Activated CD4-positive, alpha-beta memory T cell treated with anti-CD3 and anti-CD28 coated beads, Interleukin-2, amount 10 ng/mL, durations not matched to agents 7 days and 5 days (primary cell): ENCODE measurements at regions of chr7 and their contacts with region 1.

Region 1: GRCh38 chr7:44885394-44886317 is at the start of gene PURB:
- DNase-seq: peak; percentile 97
- H3K4me3 Mint-ChIP-seq: peak within 1 kb of the TSS; percentile 95
- H3K27ac Mint-ChIP-seq: peak within 1 kb of the TSS; percentile 99
- H3K4me1 Mint-ChIP-seq: peaks cover 64% of the 10 kb centered on the region
- H3K27me3 Mint-ChIP-seq: no peaks in the 10 kb centered on the region
- total RNA-seq, gene PURB: 27.7 to 29.3 TPM

Region 2: GRCh38 chr7:44490351-44491200 is 395.1 kb before region 1 on chr7 and contains the start of gene NUDCD3:
- CTCF ChIA-PET with region 1: no interaction called
- POLR2A ChIA-PET with region 1: interaction called, 15 read pairs
- DNase-seq: peak; percentile 86
- H3K4me3 Mint-ChIP-seq: peak within 1 kb of the TSS; percentile 81
- H3K27ac Mint-ChIP-seq: peak within 1 kb of the TSS; percentile 85
- H3K4me1 Mint-ChIP-seq: peaks cover 43% of the 10 kb centered on the region
- H3K27me3 Mint-ChIP-seq: peaks cover 5% of the 10 kb centered on the region
- total RNA-seq, gene NUDCD3: 91.0 to 97.5 TPM

Region 3: DNA sequence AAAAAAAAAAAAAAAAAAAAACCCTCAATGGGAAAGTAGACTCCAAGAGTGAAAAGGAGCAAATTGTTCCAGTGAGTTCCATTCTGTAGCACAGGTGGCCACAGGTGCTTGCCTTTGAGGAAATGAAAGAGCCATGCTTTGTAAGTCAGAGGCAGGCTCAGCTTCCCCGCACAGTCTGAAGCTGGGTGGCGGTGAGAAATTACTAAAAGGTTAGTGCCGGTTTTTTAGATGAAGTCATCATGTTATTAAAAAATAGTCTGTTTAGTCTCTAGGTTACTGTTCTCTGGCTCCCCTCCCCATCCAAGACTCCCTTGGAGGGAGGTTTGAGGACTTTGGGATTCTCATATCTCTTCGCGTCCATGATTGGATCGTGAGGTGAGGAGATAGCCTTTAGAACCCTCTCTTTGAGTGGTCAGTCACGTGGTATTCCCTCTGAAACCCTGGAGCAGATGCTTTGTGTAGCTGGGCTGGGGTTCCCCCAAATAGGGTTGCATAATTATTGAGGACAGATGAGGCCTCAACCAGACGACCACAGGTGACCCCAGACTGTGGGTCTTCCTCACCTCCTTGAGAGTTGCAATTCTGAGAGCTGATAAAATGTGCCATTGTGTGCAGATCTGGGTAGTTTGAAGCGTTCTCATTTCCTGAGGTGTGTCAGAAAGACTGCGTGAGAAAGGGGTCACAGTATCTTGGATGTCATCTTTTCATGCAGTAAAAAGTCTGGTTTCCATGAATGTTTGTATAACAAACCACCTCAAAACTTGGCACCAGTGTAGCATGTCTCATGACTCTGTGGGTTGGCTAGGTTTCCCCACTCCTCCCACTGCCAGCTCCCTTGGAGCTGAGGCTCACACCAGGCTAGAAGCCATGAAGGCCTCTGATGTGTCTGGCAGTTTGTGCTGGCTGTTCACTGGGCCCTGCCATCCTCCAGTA is 252.1 kb before region 1 on chr7:
- CTCF ChIA-PET with region 1: no interaction called
- POLR2A ChIA-PET with region 1: interaction called, 25 read pairs
- DNase-seq: peak; percentile 67
- H3K4me3 Mint-ChIP-seq: no peak overlapping the region
- H3K27ac Mint-ChIP-seq: peak overlapping the region; percentile 100
- H3K4me1 Mint-ChIP-seq: peaks cover 99% of the 10 kb centered on the region
- H3K27me3 Mint-ChIP-seq: no peaks in the 10 kb centered on the region

Region 4: DNA sequence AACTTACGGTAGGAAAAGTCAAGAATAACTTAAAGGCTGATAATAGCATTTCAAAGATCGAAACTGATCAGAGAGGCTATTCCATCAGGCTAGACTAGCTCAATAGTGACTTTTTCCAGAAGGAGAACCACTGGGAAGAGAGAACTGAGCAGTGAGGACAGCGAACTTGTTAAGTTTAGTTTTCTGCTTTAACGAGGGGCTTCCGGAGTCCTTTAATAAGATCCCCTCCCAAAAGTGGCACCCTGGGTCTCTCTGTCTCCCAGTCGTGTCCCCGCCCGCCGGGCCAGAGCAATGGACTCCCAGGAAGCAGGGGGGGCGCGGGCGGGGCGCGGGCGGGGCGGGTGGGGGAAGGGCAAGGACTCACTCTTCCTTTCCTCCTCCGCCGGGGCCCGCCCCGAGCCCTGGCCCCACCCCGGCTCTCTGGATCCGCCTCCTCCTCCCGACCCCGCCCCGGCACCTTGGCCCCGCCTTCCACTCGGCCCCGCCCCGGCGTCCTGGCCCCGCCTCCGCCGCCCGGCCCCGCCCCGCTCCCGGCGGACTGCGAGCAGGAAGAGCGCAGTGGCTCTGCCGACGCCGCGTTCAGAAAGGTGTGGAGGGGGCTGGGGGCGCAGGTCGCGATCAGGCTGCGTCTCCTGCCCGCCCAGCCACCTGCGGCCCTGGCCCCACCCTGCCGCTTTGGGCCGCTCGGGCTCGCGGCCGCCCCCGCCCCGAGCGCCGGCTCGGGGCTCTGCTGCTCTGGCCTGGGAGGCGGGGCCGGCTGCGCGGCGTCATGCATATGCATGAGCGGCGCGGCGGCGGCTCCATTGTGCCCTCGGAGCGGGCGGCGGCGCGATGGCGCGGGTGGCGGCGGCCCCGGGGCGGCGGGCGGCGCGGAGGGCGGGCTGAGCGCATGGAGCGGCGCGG is 137.4 kb before region 1 on chr7 and contains the start of gene ZMIZ2:
- CTCF ChIA-PET with region 1: no interaction called
- POLR2A ChIA-PET with region 1: interaction called, 14 read pairs
- DNase-seq: peak; percentile 92
- H3K4me3 Mint-ChIP-seq: peak within 1 kb of the TSS; percentile 84
- H3K27ac Mint-ChIP-seq: peak within 1 kb of the TSS; percentile 66
- H3K4me1 Mint-ChIP-seq: peaks cover 43% of the 10 kb centered on the region
- H3K27me3 Mint-ChIP-seq: no peaks in the 10 kb centered on the region
- total RNA-seq, gene ZMIZ2: 85.2 to 91.4 TPM

Region 5: GRCh38 chr7:44823317-44823716 is 62.3 kb before region 1 on chr7:
- CTCF ChIA-PET with region 1: no interaction called
- POLR2A ChIA-PET with region 1: no interaction called
- DNase-seq: no peak
- H3K4me3 Mint-ChIP-seq: no peak overlapping the region
- H3K27ac Mint-ChIP-seq: no peak overlapping the region
- H3K4me1 Mint-ChIP-seq: peaks cover 16% of the 10 kb centered on the region
- H3K27me3 Mint-ChIP-seq: no peaks in the 10 kb centered on the region

Region 6: DNA sequence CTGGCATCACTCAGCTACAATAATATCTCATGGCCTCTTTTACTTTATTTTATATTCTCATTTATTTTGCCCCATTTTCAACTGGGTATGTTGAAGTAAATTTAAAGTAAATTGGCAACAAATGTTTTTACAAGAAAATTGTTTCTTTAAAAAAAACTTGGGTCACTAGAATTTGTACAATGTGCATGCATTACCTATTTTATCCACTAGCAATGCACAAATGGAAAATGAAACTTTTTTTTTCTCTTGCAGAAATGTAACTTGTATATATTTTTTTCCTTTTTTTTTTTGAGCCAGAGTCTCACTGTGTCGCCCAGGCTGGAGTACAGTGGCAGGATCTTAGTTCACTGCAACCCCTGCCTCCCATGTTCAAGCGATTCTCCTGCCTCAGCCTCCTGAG is 27.5 kb before region 1 on chr7:
- CTCF ChIA-PET with region 1: interaction called, 56 read pairs
- POLR2A ChIA-PET with region 1: interaction called, 50 read pairs
- DNase-seq: no peak
- H3K4me3 Mint-ChIP-seq: no peak overlapping the region
- H3K27ac Mint-ChIP-seq: no peak overlapping the region
- H3K4me1 Mint-ChIP-seq: peaks cover 19% of the 10 kb centered on the region
- H3K27me3 Mint-ChIP-seq: peaks cover 5% of the 10 kb centered on the region

Region 7: DNA sequence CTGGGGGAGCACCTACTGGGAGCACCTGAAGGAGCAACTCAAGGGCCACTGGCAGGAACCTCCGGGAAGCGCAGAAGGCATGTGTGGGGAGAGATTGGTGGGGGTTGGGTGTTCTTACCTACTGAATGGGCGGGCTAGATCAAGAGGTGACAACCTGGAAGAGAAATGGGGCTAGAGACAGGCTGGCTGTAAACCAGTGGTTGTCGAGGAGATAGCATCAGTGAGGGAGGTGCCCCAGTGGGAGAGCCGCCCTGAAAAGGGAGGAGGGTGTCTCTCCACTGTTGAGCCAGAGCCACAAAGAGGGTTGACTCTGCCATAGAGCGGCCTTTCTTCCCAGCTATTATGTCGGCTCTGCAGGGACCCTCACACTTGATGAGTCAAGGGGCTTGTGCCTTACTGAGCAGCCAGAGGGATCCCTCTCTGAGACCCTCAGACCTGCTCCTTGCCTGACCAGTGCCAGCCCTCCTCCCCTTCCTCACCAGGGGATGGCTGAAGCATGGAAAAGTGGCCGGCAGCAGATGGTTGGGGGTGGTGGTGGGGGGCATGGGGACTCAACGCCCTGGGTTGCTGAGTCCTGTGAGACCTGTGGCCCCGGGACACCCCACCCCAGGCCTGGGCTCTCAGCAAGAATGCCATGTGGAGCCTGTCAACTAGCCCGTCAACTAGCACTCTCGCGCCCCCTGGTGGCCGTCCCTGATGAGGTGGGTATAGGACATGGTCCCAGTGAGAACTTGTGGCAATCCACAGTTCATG is 36.1 kb after region 1 on chr7:
- CTCF ChIA-PET with region 1: interaction called, 12 read pairs
- POLR2A ChIA-PET with region 1: interaction called, 17 read pairs
- DNase-seq: peak; percentile 95
- H3K4me3 Mint-ChIP-seq: no peak overlapping the region
- H3K27ac Mint-ChIP-seq: no peak overlapping the region
- H3K4me1 Mint-ChIP-seq: peaks cover 14% of the 10 kb centered on the region
- H3K27me3 Mint-ChIP-seq: peaks cover 6% of the 10 kb centered on the region

Region 8: GRCh38 chr7:44999245-45000095 is 113.8 kb after region 1 on chr7:
- CTCF ChIA-PET with region 1: interaction called, 3 read pairs
- POLR2A ChIA-PET with region 1: interaction called, 19 read pairs
- DNase-seq: peak; percentile 100
- H3K4me3 Mint-ChIP-seq: peak overlapping the region; percentile 80
- H3K27ac Mint-ChIP-seq: peak overlapping the region; percentile 87
- H3K4me1 Mint-ChIP-seq: peaks cover 59% of the 10 kb centered on the region
- H3K27me3 Mint-ChIP-seq: no peaks in the 10 kb centered on the region